Activated CD8-positive, alpha-beta T cell treated with anti-CD3 and anti-CD28 coated beads for 36 hours (primary cell): ENCODE measurements at regions of chr13 and their contacts with region 1.

Region 1: DNA sequence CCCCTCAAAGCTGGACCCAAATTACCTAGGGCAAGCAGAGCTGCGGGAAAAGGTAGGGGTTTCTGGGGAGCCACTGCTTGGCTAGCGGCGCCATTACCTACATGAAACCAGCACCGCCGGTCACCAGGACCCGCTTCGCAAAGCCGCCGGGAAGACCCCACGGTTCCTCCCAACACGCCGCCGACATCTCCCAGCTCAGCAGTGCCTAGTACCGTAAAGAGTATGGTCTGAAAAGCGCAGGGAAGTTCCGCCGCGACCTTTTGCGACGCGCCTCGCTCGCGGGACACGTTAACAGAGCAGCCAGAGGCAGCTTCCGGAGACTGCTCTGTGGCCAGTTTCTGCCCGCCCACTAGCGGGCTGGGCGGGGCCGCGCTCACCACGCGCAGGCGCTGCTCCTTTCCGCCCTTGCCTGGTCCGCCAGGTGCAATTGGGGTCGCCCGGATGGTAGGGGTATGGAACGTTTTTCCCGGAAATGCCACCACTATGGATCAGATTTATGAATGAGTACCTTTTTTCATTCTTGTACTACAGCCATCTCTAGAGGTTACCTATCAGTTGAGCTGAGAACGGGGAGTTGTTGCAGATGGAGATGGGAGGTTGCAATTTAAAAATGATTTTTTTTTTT is at the start of gene TGDS:
- DNase-seq: peak; percentile 95
- ATAC-seq: peak; percentile 95
- H3K4me3 Mint-ChIP-seq: peak within 1 kb of the TSS; percentile 97
- H3K27ac Mint-ChIP-seq: peak within 1 kb of the TSS; percentile 93
- H3K4me1 Mint-ChIP-seq: peaks cover 36% of the 10 kb centered on the region
- H3K27me3 Mint-ChIP-seq: no peaks in the 10 kb centered on the region
- CTCF ChIP-seq: no peak
- total RNA-seq, gene TGDS: 24.0 to 27.0 TPM

Region 2: GRCh38 chr13:94268661-94269060 is 327.4 kb before region 1 on chr13:
- CTCF ChIA-PET with region 1: no interaction called
- POLR2A ChIA-PET with region 1: no interaction called
- intact Hi-C with region 1: no loop called
- DNase-seq: no peak
- ATAC-seq: no peak
- H3K4me3 Mint-ChIP-seq: no peak overlapping the region
- H3K27ac Mint-ChIP-seq: no peak overlapping the region
- H3K4me1 Mint-ChIP-seq: peaks cover 9% of the 10 kb centered on the region
- H3K27me3 Mint-ChIP-seq: no peaks in the 10 kb centered on the region
- CTCF ChIP-seq: no peak

Region 3: DNA sequence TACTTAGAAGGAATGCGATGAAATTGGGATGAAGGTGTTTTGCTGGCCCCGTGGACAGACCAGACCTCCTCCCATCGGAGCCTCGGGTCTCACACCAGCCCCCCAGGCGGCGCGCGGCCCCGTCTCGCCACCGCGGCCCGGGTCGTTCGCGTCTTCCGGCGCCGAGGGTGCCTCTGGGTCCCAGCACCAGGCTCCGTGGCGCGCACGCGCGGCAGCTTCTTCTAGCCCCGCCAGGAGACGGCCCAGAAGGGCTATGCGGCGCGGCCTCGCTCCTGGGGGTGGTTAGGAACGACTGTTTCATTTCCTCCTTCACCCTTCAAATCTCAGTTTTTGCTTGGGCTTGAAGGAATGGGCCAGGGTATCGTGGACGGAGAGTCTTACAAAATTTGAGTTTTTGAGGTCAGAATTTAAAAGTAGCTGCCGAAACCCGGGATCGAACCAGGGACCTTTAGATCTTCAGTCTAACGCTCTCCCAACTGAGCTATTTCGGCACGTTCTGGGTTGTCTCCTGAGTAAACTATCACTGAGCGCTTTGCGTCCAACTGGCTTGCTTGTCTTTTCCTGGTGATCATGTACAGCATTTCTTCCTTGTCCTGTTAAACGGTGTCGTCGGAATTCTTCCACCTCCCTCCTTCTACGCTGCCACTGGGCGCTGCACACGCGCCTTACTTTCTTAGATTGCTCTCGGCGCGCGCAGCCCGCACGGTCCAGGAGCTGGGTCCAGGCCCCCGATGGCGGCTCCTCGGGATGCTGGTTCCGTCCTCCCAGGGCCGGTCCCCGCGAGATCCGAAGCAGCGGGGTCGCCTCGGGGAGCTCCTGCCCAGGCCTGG is 46.6 kb before region 1 on chr13:
- CTCF ChIA-PET with region 1: interaction called, 3 read pairs
- POLR2A ChIA-PET with region 1: interaction called, 27 read pairs
- intact Hi-C with region 1: loop called (anchors 5 kb)
- DNase-seq: peak; percentile 95
- ATAC-seq: peak; percentile 93
- H3K4me3 Mint-ChIP-seq: peak overlapping the region; percentile 85
- H3K27ac Mint-ChIP-seq: peak overlapping the region; percentile 98
- H3K4me1 Mint-ChIP-seq: peaks cover 15% of the 10 kb centered on the region
- H3K27me3 Mint-ChIP-seq: peaks cover 3% of the 10 kb centered on the region
- CTCF ChIP-seq: no peak

Region 4: DNA sequence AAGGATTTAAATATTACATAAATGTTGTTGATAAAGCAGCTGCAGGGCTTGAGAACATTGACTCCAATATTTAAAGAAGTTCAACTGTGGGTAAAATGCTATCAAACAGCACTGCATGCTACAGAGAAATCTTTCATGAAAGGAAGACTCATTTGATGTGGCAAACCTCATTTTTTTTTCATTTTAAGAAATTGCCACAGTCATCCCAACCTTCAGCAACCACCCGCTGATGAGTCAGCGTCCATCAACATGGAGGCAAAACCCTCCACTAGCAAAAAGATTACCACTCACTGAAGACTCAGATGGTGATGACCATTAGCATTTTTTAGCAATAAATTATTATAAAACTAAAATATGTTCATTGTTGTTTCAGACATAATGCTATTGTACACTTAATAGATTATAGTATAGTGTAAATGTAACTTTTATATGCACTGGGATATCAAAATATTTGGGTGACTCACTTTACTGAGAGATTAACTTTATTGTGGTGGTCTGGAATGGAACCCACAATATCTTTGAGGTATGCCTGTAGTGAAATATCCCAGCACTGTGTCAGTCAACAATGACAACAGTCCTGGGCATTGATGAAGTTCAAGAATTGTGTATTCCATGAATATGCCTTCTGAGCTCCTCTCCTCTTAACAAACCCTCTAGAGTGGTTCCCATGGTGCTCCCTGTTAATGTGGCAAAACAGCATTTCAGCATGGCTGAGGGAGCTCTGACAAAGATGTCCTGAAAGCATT is 168.7 kb after region 1 on chr13:
- CTCF ChIA-PET with region 1: no interaction called
- POLR2A ChIA-PET with region 1: no interaction called
- intact Hi-C with region 1: no loop called
- DNase-seq: peak; percentile 38
- ATAC-seq: peak; percentile 20
- H3K4me3 Mint-ChIP-seq: no peak overlapping the region
- H3K27ac Mint-ChIP-seq: no peak overlapping the region
- H3K4me1 Mint-ChIP-seq: no peaks in the 10 kb centered on the region
- H3K27me3 Mint-ChIP-seq: peaks cover 25% of the 10 kb centered on the region
- CTCF ChIP-seq: no peak

Region 5: DNA sequence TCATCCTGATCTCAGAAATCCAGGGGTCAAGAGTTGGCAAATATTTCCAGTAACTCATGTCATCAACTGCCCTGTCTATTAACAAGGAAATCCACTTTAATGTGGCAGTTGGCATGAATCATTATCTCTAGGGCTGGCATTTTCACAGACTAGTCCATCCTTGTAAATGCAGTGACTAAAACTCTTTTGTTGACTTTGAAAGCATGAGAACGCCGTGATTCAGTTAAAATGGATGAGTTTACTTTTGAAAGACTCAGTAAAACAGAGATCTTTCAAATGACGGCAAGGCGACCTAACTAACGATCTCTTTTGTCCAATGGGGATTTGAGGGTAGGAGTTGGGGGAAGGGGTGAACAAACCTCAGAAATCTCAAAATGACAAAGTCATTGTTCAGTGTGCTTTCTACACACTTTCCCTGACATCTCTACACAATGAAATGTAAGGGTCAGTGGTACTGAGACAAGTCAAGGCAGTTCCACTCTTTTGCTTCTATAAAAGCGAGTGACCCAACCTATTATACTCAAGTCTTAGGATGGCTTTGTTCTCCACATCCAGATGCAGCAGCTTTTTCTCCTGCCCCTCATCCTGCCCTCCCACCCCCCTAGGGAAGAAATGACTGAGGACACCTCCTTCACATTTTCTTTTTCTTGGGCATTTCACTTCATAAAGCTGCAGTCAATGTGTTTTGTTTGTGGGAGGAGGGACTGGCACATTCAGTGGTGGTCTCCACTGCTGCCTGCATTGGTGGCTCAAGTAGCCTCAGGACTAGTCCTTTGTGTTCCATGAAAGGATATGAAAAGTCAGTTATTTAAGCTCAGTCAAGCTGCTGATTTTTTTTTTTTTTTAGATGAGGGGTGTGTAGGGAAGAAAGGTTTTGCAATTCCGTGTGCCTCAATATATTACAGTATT is 504.7 kb after region 1 on chr13:
- CTCF ChIA-PET with region 1: no interaction called
- POLR2A ChIA-PET with region 1: no interaction called
- intact Hi-C with region 1: no loop called
- DNase-seq: no peak
- ATAC-seq: no peak
- H3K4me3 Mint-ChIP-seq: no peak overlapping the region
- H3K27ac Mint-ChIP-seq: peak overlapping the region; percentile 8
- H3K4me1 Mint-ChIP-seq: no peaks in the 10 kb centered on the region
- H3K27me3 Mint-ChIP-seq: no peaks in the 10 kb centered on the region
- CTCF ChIP-seq: no peak